Endothelial cell of umbilical vein (primary cell): ENCODE measurements at regions of chr15 and their contacts with region 1.

Region 1: DNA sequence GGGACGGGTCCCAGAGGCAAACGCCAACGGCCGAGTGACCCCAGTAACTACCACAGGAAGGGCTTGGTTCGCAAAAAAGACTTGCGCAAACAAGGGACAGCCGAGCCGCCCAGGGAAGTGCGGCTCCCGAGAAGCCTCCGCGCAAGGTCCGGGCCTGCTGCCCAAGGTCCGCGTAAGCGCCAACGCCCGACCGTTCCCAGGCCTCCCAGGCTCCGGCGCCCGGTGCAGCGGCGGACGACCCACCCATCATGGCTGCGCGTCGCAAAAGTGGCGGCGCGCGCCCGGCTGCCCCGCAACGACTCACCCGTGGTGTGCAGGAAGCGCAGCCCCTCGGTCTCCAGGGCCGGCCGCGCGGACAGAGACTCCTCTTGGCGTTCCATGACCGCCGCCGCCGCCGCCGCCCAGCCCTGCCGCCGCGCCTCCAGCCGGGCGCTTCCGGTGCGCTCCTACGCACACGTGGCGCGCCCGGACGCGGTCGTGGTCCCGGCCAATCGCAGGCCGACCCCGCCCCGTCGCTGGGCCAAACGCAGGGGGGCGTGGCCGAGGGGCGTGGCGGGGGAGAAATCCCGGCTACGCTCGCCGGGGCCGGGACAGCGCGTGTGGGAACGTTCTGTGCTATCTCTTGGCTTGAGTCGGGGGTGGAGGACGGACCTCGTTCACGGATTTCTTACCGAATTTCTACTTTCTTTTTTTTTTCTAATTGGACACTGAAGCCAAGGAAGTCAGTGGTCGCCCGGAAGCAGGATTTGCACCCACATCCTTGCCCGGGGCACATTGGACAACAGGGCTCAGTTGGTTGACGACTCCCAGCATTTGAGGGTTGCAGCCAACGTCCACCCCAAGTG is at the start of gene SELENOS:
- DNase-seq: peak; percentile 89
- H3K4me3 ChIP-seq: peak within 1 kb of the TSS; percentile 63 to 98 (median 82)
- H3K27ac ChIP-seq: peak within 1 kb of the TSS; percentile 75
- H3K4me1 ChIP-seq: peaks cover 11% of the 10 kb centered on the region
- H3K27me3 ChIP-seq: no peaks in the 10 kb centered on the region
- CTCF ChIP-seq: no peak
- POLR2A ChIP-seq: peak; percentile 44
- total RNA-seq, gene SELENOS: 70.4 and 73.2 TPM in 2 replicates

Region 2: GRCh38 chr15:100721770-100722550 is 555.3 kb before region 1 on chr15:
- CTCF ChIA-PET with region 1: no interaction called
- POLR2A ChIA-PET with region 1: no interaction called
- dilution Hi-C with region 1: no loop called
- intact Hi-C with region 1: loop called (anchors 5 kb)
- DNase-seq: peak; percentile 96
- H3K4me3 ChIP-seq: no peak overlapping the region
- H3K27ac ChIP-seq: peak overlapping the region; percentile 82
- H3K4me1 ChIP-seq: peaks cover 27% of the 10 kb centered on the region
- H3K27me3 ChIP-seq: no peaks in the 10 kb centered on the region
- CTCF ChIP-seq: no peak
- POLR2A ChIP-seq: no peak

Region 3: DNA sequence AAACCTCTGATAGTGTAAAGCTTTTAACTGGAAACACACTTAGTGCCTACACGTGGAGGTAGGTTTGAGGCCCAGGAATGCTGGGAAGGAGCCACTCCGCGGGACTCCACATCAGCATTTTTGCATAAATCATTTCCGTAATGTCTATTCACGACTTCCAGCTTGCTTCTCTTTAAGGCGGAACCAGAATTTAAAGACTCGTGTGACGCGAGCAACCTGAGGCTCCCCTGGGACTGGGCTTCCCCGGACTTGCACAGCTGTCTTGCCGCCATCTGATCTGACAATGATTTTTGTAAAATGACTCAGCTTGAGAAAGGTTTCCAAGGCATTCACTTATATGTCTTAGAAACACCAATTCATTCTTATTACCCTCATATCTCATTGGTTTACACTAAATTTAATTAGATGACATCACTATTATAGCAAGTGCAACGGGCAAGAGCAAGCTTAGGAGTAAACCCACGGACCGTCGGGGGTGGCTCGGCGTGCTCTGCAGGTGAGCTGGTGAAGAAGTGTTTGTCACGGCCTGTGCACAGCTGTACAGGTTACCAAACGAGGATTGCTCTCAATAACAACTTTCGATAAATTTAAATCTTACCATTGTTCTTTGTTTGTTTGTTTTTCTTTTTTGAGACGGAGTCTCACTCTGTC is 120.6 kb before region 1 on chr15:
- CTCF ChIA-PET with region 1: no interaction called
- POLR2A ChIA-PET with region 1: no interaction called
- dilution Hi-C with region 1: no loop called
- intact Hi-C with region 1: no loop called
- DNase-seq: no peak
- H3K4me3 ChIP-seq: no peak overlapping the region
- H3K27ac ChIP-seq: no peak overlapping the region
- H3K4me1 ChIP-seq: no peaks in the 10 kb centered on the region
- H3K27me3 ChIP-seq: no peaks in the 10 kb centered on the region
- CTCF ChIP-seq: no peak
- POLR2A ChIP-seq: no peak

Region 4: DNA sequence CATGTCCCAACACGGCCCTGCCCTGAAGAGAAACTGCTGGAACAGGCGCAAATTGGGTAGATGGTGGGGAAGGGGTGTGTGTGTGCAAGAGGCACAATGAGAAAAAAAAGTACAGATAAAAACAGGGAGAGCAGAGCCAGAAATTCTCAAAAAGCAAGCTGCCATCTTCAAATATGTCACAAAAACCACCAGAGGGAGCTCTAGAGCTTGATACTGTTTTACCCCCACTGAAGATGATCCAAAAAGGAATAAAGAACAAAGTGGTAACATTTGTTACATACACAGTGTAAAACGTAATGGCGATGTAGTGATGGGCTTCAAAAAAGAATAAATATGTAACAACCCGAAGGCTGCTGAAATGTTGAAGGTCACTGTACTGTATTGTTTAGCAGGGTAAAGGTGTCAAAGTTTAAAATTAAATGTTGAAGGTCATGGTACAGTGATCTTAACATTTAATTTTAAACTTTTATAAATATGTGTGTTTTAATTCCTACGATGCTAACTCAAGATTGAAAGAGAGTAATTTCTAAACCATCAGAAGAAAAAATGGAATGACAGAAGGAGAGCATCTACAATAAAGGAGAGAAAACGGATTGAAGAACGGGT is 11.8 kb after region 1 on chr15:
- CTCF ChIA-PET with region 1: interaction called, 13 read pairs
- POLR2A ChIA-PET with region 1: no interaction called
- dilution Hi-C with region 1: no loop called
- intact Hi-C with region 1: loop called (anchors 1 kb)
- DNase-seq: peak; percentile 28
- H3K4me3 ChIP-seq: no peak overlapping the region
- H3K27ac ChIP-seq: no peak overlapping the region
- H3K4me1 ChIP-seq: peaks cover 9% of the 10 kb centered on the region
- H3K27me3 ChIP-seq: no peaks in the 10 kb centered on the region
- CTCF ChIP-seq: peak; percentile 46 to 57
- POLR2A ChIP-seq: no peak

Region 5: GRCh38 chr15:101294731-101295606 is 17.7 kb after region 1 on chr15 and contains the start of gene SNRPA1:
- CTCF ChIA-PET with region 1: interaction called, 3 read pairs
- POLR2A ChIA-PET with region 1: no interaction called
- dilution Hi-C with region 1: no loop called
- intact Hi-C with region 1: loop called (anchors 1 kb)
- DNase-seq: peak; percentile 95
- H3K4me3 ChIP-seq: peak within 1 kb of the TSS; percentile 77 to 94 (median 80)
- H3K27ac ChIP-seq: peak within 1 kb of the TSS; percentile 70
- H3K4me1 ChIP-seq: peaks cover 14% of the 10 kb centered on the region
- H3K27me3 ChIP-seq: no peaks in the 10 kb centered on the region
- CTCF ChIP-seq: no peak
- POLR2A ChIP-seq: peak; percentile 53
- total RNA-seq, gene SNRPA1: 80.8 and 82.7 TPM in 2 replicates